CD8-positive, alpha-beta T cell (primary cell): ENCODE measurements at regions of chr12 and their contacts with region 1.

Region 1: GRCh38 chr12:96906849-96907670 is at the start of gene NEDD1:
- DNase-seq: peak; percentile 65 to 90 (median 81)
- ATAC-seq: peak; percentile 72
- H3K4me3 ChIP-seq: peak within 1 kb of the TSS; percentile 99
- H3K4me3 Mint-ChIP-seq: peak within 1 kb of the TSS; percentile 91
- H3K27ac ChIP-seq: peak within 1 kb of the TSS; percentile 99 to 100
- H3K27ac Mint-ChIP-seq: peak within 1 kb of the TSS; percentile 99
- H3K4me1 ChIP-seq: peaks cover 21% of the 10 kb centered on the region
- H3K4me1 Mint-ChIP-seq: peaks cover 46% of the 10 kb centered on the region
- H3K27me3 ChIP-seq: no peaks in the 10 kb centered on the region
- H3K27me3 Mint-ChIP-seq: no peaks in the 10 kb centered on the region
- CTCF ChIP-seq: no peak
- total RNA-seq, gene NEDD1: 26.7 to 27.8 TPM

Region 2: GRCh38 chr12:95473884-95474659 is 1433.0 kb before region 1 on chr12 and contains the start of gene METAP2:
- CTCF ChIA-PET with region 1: no interaction called
- POLR2A ChIA-PET with region 1: interaction called, 3 read pairs
- intact Hi-C with region 1: loop called in 1 of 2 experiments (anchors 10 kb)
- DNase-seq: peak; percentile 73 to 94 (median 91)
- ATAC-seq: peak; percentile 97
- H3K4me3 ChIP-seq: peak within 1 kb of the TSS; percentile 77 to 88
- H3K4me3 Mint-ChIP-seq: peak within 1 kb of the TSS; percentile 99
- H3K27ac ChIP-seq: peak within 1 kb of the TSS; percentile 78 to 84
- H3K27ac Mint-ChIP-seq: peak within 1 kb of the TSS; percentile 98
- H3K4me1 ChIP-seq: peaks cover 29% of the 10 kb centered on the region
- H3K4me1 Mint-ChIP-seq: peaks cover 54% of the 10 kb centered on the region
- H3K27me3 ChIP-seq: no peaks in the 10 kb centered on the region
- H3K27me3 Mint-ChIP-seq: no peaks in the 10 kb centered on the region
- CTCF ChIP-seq: no peak
- total RNA-seq, gene METAP2: 68.3 to 69.9 TPM

Region 3: DNA sequence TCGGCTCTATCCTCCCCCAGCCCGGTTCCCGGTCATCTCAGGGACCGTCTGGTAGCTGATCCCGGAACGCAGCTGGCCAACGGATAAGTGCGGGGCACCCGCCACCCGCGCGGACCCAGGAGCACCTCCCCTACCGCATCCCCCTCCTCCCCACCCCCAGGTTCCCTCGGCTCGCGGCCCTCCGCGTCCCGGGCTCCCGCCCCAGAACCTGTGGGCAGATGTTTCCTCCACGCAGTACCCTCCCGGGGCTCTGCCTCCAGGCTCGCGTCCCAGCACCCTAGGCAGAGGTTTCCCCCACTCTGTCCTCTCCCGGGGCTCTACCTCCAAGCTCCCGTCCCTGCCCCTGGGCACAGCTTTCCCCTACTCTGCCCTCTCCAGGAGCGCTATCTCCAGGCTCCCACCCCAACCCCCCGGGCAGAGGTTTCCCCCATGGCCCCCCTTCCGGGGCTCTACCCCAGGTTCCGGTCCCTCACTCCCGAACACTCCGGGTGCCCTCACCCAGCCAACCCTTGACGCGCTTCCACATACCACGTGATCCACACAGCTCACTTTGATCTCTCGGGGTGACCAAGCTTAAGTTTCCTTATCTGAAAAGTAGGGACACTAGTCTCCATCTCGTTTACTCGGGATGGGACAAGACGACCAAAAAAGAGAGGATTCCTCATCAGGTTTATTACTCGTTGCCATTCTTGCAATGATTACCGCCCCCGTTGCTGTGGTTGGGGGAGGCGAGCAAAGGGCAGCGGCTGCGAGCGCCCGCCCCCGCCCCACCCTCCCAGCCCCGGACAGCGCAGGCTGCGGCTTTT is 964.3 kb before region 1 on chr12 and contains the start of gene CCDC38:
- CTCF ChIA-PET with region 1: no interaction called
- POLR2A ChIA-PET with region 1: no interaction called
- intact Hi-C with region 1: loop called in 1 of 2 experiments (anchors 10 kb)
- DNase-seq: peak; percentile 63 to 92 (median 82)
- ATAC-seq: peak; percentile 92
- H3K4me3 ChIP-seq: peak within 1 kb of the TSS; percentile 67 to 83
- H3K4me3 Mint-ChIP-seq: peak within 1 kb of the TSS; percentile 96
- H3K27ac ChIP-seq: peak within 1 kb of the TSS; percentile 71 to 79
- H3K27ac Mint-ChIP-seq: peak within 1 kb of the TSS; percentile 92
- H3K4me1 ChIP-seq: peaks cover 11% of the 10 kb centered on the region
- H3K4me1 Mint-ChIP-seq: peaks cover 10% of the 10 kb centered on the region
- H3K27me3 ChIP-seq: no peaks in the 10 kb centered on the region
- H3K27me3 Mint-ChIP-seq: no peaks in the 10 kb centered on the region
- CTCF ChIP-seq: no peak
- total RNA-seq, gene CCDC38: not detected

Region 4: GRCh38 chr12:96194971-96195844 is 711.9 kb before region 1 on chr12:
- CTCF ChIA-PET with region 1: no interaction called
- POLR2A ChIA-PET with region 1: no interaction called
- intact Hi-C with region 1: loop called (anchors 2 to 10 kb)
- DNase-seq: peak; percentile 37 to 93 (median 73)
- ATAC-seq: peak; percentile 70
- H3K4me3 ChIP-seq: peak overlapping the region; percentile 87 to 95
- H3K4me3 Mint-ChIP-seq: peak overlapping the region; percentile 94
- H3K27ac ChIP-seq: peak overlapping the region; percentile 74 to 77
- H3K27ac Mint-ChIP-seq: peak overlapping the region; percentile 97
- H3K4me1 ChIP-seq: peaks cover 43% of the 10 kb centered on the region
- H3K4me1 Mint-ChIP-seq: peaks cover 64% of the 10 kb centered on the region
- H3K27me3 ChIP-seq: no peaks in the 10 kb centered on the region
- H3K27me3 Mint-ChIP-seq: no peaks in the 10 kb centered on the region
- CTCF ChIP-seq: no peak

Region 5: DNA sequence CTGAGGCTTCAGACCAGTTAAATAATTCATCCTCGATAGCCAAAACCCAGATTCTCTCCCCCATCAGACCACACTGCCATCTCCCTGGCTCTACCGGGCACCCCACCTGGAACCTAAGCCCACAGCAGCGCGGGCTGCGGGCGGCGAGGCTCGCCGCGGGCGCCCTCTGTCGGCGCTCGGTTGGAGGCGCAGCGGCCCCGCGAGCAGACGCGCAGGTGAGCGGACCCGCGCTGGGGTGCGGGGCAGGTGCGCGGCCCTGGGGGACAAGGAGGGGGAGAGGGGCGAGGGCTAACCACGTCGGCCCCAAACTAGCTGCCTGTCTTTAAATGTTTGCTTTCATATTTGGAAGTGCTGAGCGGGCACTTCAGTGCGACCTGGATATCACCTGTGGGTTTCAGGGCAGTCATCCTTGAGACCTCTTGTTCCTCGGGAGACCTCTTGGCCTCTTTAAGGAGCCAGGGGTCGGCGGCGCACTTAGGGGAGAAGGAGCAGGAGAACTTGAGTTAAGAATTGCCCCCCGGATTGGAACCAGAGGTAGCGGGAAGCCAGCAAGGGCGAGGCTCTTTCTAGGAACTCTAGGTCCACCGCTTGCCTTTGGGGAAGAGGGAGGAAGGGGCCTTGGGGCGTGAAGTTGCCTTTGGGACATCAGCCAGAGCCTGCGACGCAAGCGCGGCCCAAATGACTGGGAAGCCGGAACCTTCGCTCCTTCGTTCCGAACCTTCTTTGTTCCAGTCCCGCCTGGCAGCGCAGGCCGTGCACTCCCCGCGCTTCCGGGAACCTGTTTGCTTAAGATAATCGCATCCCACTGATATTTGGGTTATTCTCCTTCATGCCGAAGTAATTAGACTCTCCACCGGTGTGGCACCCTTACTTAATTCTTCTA is 78.7 kb after region 1 on chr12:
- CTCF ChIA-PET with region 1: interaction called, 3 read pairs
- POLR2A ChIA-PET with region 1: no interaction called
- intact Hi-C with region 1: loop called (anchors 5 kb)
- DNase-seq: peak; percentile 16 to 70 (median 34)
- ATAC-seq: peak; percentile 93
- H3K4me3 ChIP-seq: peak overlapping the region; percentile 42 to 51
- H3K4me3 Mint-ChIP-seq: peak overlapping the region; percentile 79
- H3K27ac ChIP-seq: no peak overlapping the region
- H3K27ac Mint-ChIP-seq: no peak overlapping the region
- H3K4me1 ChIP-seq: peaks cover 12% of the 10 kb centered on the region
- H3K4me1 Mint-ChIP-seq: peaks cover 5% of the 10 kb centered on the region
- H3K27me3 ChIP-seq: peaks cover 0 to 3% of the 10 kb centered on the region in 2 experiments
- H3K27me3 Mint-ChIP-seq: peaks cover 20% of the 10 kb centered on the region
- CTCF ChIP-seq: peak; percentile 85

Region 6: DNA sequence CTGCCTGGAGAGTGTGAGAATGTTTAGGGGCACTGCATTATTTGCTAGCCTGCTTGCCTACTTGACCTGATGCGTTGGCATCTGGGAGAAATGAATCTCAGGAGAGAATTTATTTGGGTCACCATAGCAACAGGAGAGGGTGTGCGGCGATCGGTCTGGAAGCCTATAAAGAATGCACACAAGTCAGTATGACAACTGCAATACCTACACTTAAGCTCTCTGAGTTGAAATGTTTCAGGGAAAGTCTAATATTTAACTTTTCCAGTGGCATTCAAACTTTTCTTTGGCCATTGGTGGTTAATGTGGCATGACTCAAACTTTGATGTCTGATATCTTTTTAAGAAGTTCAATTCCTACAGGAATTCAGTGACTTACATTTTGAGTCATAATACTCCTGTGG is 205.1 kb after region 1 on chr12:
- CTCF ChIA-PET with region 1: no interaction called
- POLR2A ChIA-PET with region 1: no interaction called
- intact Hi-C with region 1: no loop called
- DNase-seq: no peak
- ATAC-seq: no peak
- H3K4me3 ChIP-seq: no peak overlapping the region
- H3K4me3 Mint-ChIP-seq: no peak overlapping the region
- H3K27ac ChIP-seq: no peak overlapping the region
- H3K27ac Mint-ChIP-seq: no peak overlapping the region
- H3K4me1 ChIP-seq: no peaks in the 10 kb centered on the region
- H3K4me1 Mint-ChIP-seq: no peaks in the 10 kb centered on the region
- H3K27me3 ChIP-seq: no peaks in the 10 kb centered on the region
- H3K27me3 Mint-ChIP-seq: peaks cover 5% of the 10 kb centered on the region
- CTCF ChIP-seq: no peak

Region 7: DNA sequence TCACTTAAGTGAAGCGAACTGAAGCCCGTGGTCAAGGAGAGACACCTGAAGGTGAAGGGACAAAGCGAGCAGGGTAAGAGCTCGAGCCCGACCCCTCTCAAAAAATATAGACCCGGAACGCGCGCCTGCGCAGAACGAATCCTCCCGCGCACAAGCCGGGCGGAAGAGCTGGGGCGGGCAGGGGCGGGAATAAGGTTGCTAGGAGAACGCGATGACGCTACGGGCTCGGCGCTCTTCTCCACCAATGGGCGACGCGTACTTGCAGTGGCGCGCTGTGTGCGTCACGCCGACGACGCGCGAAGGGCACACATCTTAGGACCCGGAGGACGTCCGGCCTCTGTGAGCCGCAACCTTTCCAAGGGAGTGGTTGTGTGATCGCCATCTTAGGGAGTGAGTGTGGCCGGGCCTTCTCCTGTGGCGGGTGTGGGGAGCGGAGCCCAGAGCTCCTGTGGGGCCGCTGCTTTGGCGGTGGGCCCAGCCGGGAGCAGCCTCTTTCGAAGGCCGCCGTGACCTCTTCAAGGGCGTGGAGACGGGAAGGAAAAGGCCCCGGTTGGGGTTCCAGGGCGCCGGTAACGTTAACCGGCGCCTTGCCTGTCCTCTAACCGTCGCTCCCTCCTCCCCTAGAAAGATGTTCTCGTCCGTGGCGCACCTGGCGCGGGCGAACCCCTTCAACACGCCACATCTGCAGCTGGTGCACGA is 1686.4 kb after region 1 on chr12 and contains the start of gene SLC25A3:
- CTCF ChIA-PET with region 1: no interaction called
- POLR2A ChIA-PET with region 1: no interaction called
- intact Hi-C with region 1: loop called in 1 of 2 experiments (anchors 2 kb)
- DNase-seq: peak; percentile 90 to 99 (median 95)
- ATAC-seq: peak; percentile 92
- H3K4me3 ChIP-seq: peak within 1 kb of the TSS; percentile 89 to 97
- H3K4me3 Mint-ChIP-seq: peak within 1 kb of the TSS; percentile 97
- H3K27ac ChIP-seq: peak within 1 kb of the TSS; percentile 92 to 99
- H3K27ac Mint-ChIP-seq: peak within 1 kb of the TSS; percentile 98
- H3K4me1 ChIP-seq: peaks cover 23% of the 10 kb centered on the region
- H3K4me1 Mint-ChIP-seq: peaks cover 39% of the 10 kb centered on the region
- H3K27me3 ChIP-seq: no peaks in the 10 kb centered on the region
- H3K27me3 Mint-ChIP-seq: no peaks in the 10 kb centered on the region
- CTCF ChIP-seq: no peak
- total RNA-seq, gene SLC25A3: 686 TPM